ENCODE measurements at regions of chr6 and their contacts with region 1.

Region 1: GRCh38 chr6:105587349-105588122 is 184.7 kb upstream of the PREP start:
- DNase-seq: no peak
- ATAC-seq: no peak
- H3K4me3 ChIP-seq: no peak overlapping the region
- H3K27ac ChIP-seq: no peak overlapping the region
- H3K4me1 ChIP-seq: peaks cover 3% of the 10 kb centered on the region; the same call in 1 of the 2 replicates
- H3K27me3 ChIP-seq: no peaks in the 10 kb centered on the region
- CTCF ChIP-seq: no peak
- EP300 ChIP-seq: no peak
- POLR2A ChIP-seq: no peak
- RAD21 ChIP-seq: no peak

Region 2: GRCh38 chr6:105469948-105470347 is 117.6 kb before region 1 on chr6:
- CTCF ChIA-PET with region 1: no interaction called
- POLR2A ChIA-PET with region 1: no interaction called
- RAD21 ChIA-PET with region 1: no interaction called
- SMC1A ChIA-PET with region 1: no interaction called
- in situ Hi-C with region 1: no loop called
- intact Hi-C with region 1: no loop called
- DNase-seq: no peak
- ATAC-seq: no peak
- H3K4me3 ChIP-seq: no peak overlapping the region
- H3K27ac ChIP-seq: no peak overlapping the region
- H3K4me1 ChIP-seq: no peaks in the 10 kb centered on the region
- H3K27me3 ChIP-seq: no peaks in the 10 kb centered on the region
- CTCF ChIP-seq: no peak
- EP300 ChIP-seq: no peak
- POLR2A ChIP-seq: no peak
- RAD21 ChIP-seq: no peak

Region 3: GRCh38 chr6:105569706-105570105 is 17.8 kb before region 1 on chr6:
- CTCF ChIA-PET with region 1: interaction called, 3 read pairs
- POLR2A ChIA-PET with region 1: interaction called, 8 read pairs
- RAD21 ChIA-PET with region 1: no interaction called
- SMC1A ChIA-PET with region 1: interaction called, 12 read pairs
- in situ Hi-C with region 1: no loop called
- intact Hi-C with region 1: no loop called
- DNase-seq: no peak
- ATAC-seq: no peak
- H3K4me3 ChIP-seq: no peak overlapping the region
- H3K27ac ChIP-seq: no peak overlapping the region
- H3K4me1 ChIP-seq: no peaks in the 10 kb centered on the region
- H3K27me3 ChIP-seq: peaks cover 0 to 3% of the 10 kb centered on the region in 2 experiments; a peak in 1 of 4 replicates
- CTCF ChIP-seq: no peak
- EP300 ChIP-seq: no peak
- POLR2A ChIP-seq: no peak
- RAD21 ChIP-seq: no peak

Region 4: GRCh38 chr6:105601541-105602236 is 14.2 kb after region 1 on chr6:
- CTCF ChIA-PET with region 1: interaction called, 9 read pairs
- POLR2A ChIA-PET with region 1: interaction called, 7 read pairs
- RAD21 ChIA-PET with region 1: interaction called, 9 read pairs
- SMC1A ChIA-PET with region 1: interaction called, 10 read pairs
- in situ Hi-C with region 1: no loop called
- intact Hi-C with region 1: no loop called
- DNase-seq: peak; percentile 99
- ATAC-seq: peak; percentile 92
- H3K4me3 ChIP-seq: peak overlapping the region; percentile 53; the same call in 1 of the 2 replicates
- H3K27ac ChIP-seq: peak overlapping the region; percentile 86
- H3K4me1 ChIP-seq: peaks cover 24% of the 10 kb centered on the region
- H3K27me3 ChIP-seq: no peaks in the 10 kb centered on the region
- CTCF ChIP-seq: no peak
- EP300 ChIP-seq: peak; percentile 59 to 86; a peak in 3 of 4 replicates
- POLR2A ChIP-seq: peak; percentile 50
- RAD21 ChIP-seq: peak; percentile 12; the same call in 1 of the 2 replicates

Measured in GM12878 (cell line).